ENCODE measurements at regions of chr2 and their contacts with region 1.

Region 1: GRCh38 chr2:72859831-72860262 is 27.4 kb upstream of the SPR start:
- DNase-seq: no peak
- H3K4me3 ChIP-seq: no peak overlapping the region
- H3K27ac ChIP-seq: no peak overlapping the region
- H3K4me1 ChIP-seq: peaks cover 4 to 12% (median 10%) of the 10 kb centered on the region in 4 donors
- H3K27me3 ChIP-seq: peaks cover 0 to 49% (median 3%) of the 10 kb centered on the region in 4 donors
- CTCF ChIP-seq: peak; percentile 52 to 62 (median 53)
- EP300 ChIP-seq: no peak
- POLR2A ChIP-seq: no peak

Region 2: DNA sequence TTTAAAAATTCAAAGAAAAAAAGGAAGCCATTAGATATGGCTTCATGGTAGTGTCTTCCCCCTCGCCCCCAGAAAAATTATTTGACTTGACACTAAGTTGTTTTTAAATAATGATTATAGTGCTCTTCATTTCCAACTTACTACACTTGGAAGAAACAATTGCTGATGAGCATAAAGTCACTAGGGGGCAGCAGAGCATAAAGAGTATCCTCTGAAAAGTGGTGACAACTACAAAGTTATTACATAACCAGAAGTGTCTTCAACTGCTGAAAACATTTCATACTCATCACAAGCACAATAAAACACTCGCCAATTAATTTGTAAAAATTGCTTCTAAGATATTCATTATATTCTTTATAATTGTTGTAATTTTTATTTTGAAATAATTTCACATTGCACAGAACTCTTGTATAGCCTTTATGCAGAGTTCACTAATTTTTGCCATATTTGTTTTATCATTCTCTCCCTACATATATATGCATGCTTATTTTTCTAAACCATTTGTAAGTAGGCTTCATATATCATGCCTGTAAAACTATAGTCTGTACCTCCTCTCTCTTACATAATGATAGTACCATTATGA is 88.9 kb before region 1 on chr2:
- intact Hi-C with region 1: loop called (anchors 2 kb)
- DNase-seq: peak; percentile 92
- H3K4me3 ChIP-seq: no peak overlapping the region
- H3K27ac ChIP-seq: no peak overlapping the region
- H3K4me1 ChIP-seq: no peaks in the 10 kb centered on the region
- H3K27me3 ChIP-seq: no peaks in the 10 kb centered on the region
- CTCF ChIP-seq: peak; percentile 79 to 85 (median 84)
- EP300 ChIP-seq: no peak
- POLR2A ChIP-seq: no peak

Region 3: GRCh38 chr2:72803626-72804320 is 56.1 kb before region 1 on chr2:
- intact Hi-C with region 1: no loop called
- DNase-seq: no peak
- H3K4me3 ChIP-seq: no peak overlapping the region
- H3K27ac ChIP-seq: no peak overlapping the region
- H3K4me1 ChIP-seq: peaks cover 0 to 8% (median 0%) of the 10 kb centered on the region in 4 donors
- H3K27me3 ChIP-seq: no peaks in the 10 kb centered on the region
- CTCF ChIP-seq: no peak
- EP300 ChIP-seq: no peak
- POLR2A ChIP-seq: no peak